PC-9 (cell line): ENCODE measurements at regions of chr10 and their contacts with region 1.

Region 1: GRCh38 chr10:46251857-46252847 is 34.6 kb upstream of the ANTXRL start:
- DNase-seq: no peak
- H3K4me3 ChIP-seq: no peak overlapping the region
- H3K27ac ChIP-seq: no peak overlapping the region
- H3K4me1 ChIP-seq: 0 out of 2 replicates have a peak, but pooled peaks cover 4% of the 10 kb centered on the region
- H3K27me3 ChIP-seq: no peaks in the 10 kb centered on the region
- CTCF ChIP-seq: no peak

Region 2: DNA sequence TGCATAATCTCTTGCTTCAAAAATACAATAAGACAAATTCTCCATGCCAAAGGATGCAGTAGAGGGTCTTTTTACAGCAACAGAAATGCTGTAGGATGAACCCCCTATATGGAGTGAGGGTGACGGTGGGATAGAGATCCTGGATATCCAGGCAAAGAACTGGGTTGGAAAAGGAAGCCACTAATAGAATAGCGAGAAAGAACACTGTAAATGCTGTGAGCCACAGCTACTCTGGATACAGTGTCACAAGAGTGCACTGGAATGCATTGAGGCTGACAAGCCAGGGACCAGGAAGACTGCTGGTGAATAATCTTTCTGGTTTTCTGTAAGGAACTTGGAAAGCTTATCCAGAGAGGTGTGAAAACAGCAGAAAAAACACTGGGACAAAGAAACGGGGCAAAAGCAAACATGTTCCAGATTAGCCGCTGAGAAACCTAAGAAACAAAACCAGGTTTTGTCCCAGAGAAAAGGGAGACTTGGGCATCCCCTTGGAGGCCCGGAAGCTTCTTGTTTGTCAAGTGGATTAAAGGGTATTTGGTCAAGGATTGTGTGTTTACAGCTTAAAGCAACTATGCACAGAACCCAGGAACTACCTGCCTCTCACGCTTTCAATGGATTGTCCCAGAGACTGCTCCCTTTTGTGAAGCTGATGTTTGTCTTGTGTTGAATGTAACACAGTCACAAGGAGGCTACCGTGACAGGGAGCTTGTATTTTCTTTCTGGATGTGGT is 199.9 kb before region 1 on chr10:
- CTCF ChIA-PET with region 1: no interaction called
- POLR2A ChIA-PET with region 1: no interaction called
- intact Hi-C with region 1: no loop called
- DNase-seq: no peak
- H3K4me3 ChIP-seq: no peak overlapping the region
- H3K27ac ChIP-seq: no peak overlapping the region
- H3K4me1 ChIP-seq: no peaks in the 10 kb centered on the region
- H3K27me3 ChIP-seq: no peaks in the 10 kb centered on the region
- CTCF ChIP-seq: no peak

Region 3: DNA sequence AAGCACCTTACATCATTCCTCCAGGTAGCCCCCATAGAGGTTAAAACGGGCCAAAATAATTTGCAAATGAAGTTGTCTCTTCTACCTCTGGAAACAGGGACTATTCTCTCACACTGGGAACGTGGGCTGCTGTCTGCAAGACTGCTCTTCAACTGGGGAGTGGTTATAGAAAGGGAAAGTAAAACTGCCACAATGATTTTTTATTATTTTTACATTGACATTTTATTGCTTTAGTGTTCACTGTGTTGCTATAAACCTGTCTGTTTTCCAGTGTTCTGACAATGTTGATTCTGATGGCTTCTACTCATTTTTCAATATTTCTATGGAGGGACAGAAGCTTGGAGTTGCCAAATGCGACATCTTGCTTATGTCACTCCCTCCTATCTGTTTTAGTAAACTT is 80.5 kb before region 1 on chr10:
- CTCF ChIA-PET with region 1: no interaction called
- POLR2A ChIA-PET with region 1: no interaction called
- intact Hi-C with region 1: no loop called
- DNase-seq: no peak
- H3K4me3 ChIP-seq: no peak overlapping the region
- H3K27ac ChIP-seq: no peak overlapping the region
- H3K4me1 ChIP-seq: no peaks in the 10 kb centered on the region
- H3K27me3 ChIP-seq: no peaks in the 10 kb centered on the region
- CTCF ChIP-seq: no peak

Region 4: GRCh38 chr10:46284293-46285229 is 32.4 kb after region 1 on chr10:
- CTCF ChIA-PET with region 1: no interaction called
- POLR2A ChIA-PET with region 1: no interaction called
- intact Hi-C with region 1: no loop called
- DNase-seq: peak; percentile 77 to 96
- H3K4me3 ChIP-seq: peak overlapping the region; percentile 93
- H3K27ac ChIP-seq: peak overlapping the region; percentile 57
- H3K4me1 ChIP-seq: peaks cover 57% of the 10 kb centered on the region
- H3K27me3 ChIP-seq: no peaks in the 10 kb centered on the region
- CTCF ChIP-seq: no peak

Region 5: DNA sequence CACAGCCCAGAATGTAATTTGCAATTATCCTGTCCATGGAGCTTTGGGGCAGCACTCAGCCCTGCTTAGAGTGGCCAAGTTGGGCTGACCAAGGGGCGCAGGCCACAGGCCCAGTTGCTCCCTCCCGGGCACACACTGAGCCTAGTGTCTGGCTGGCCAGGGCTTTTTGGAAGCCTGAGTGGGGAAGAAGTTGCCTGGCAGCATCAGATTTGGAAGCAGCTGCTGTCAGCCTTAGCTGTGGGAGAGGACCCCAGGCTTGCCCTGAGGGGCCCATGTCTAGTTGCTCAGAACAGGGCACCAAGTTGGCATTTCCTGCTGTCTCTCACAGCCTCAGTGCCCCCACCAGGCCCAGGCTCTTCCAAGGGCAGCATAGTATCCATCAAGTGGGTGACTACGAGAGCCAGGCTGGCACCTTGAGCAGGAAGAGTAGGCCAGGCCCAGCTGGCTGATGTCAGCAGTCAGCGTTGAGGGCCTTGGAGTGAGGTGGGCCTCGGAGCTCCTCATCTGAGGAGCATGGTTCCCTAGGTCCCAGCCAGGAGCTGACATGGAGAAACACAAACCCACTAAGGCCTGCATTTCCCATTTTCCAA is 49.0 kb after region 1 on chr10:
- CTCF ChIA-PET with region 1: interaction called, 15 read pairs
- POLR2A ChIA-PET with region 1: no interaction called
- intact Hi-C with region 1: no loop called
- DNase-seq: no peak
- H3K4me3 ChIP-seq: no peak overlapping the region
- H3K27ac ChIP-seq: no peak overlapping the region
- H3K4me1 ChIP-seq: peaks cover 13% of the 10 kb centered on the region
- H3K27me3 ChIP-seq: no peaks in the 10 kb centered on the region
- CTCF ChIP-seq: no peak

Region 6: DNA sequence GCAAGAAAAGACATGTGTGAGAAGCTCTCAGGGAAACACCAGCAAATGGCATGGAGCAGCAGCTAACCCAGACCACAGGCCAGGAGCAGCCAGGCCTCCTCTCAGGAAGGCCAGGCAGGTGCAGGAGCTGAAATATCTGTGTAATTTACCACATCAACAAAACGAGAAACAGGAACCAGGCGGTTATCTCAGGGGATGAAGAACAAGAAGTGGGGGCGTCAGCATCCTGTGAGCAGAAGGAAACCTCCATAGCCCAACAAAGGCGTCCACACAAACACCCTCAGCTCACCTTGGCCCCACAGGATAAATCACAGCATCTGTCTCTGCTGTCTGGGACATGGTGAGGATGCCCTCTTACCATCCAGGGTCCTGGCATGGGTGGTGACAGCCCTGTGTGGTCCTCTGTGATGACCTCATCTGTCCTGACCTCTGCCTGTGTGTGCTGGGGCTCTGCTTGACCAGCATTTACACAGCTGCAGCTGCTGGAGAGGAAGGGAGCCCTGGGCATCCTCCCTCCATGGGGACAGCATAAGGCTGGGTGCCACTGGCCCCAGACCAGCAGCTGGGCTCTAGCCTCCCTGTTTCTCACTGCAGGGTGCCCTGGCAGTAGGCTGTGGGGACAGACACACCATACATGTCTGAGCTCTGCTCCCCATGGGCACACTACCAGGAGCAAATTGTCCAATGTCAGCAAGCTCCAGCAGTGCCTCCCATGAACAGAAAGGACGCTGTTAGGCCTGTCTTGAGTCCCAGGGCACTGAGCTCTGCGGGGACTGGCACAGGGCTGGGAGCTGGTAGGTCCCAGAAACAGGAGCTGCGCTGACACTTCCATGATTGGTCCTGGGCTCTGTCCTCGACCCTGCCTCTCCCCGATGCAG is 1197.2 kb after region 1 on chr10:
- CTCF ChIA-PET with region 1: no interaction called
- POLR2A ChIA-PET with region 1: no interaction called
- intact Hi-C with region 1: no loop called
- DNase-seq: no peak
- H3K4me3 ChIP-seq: no peak overlapping the region
- H3K27ac ChIP-seq: no peak overlapping the region
- H3K4me1 ChIP-seq: no peaks in the 10 kb centered on the region
- H3K27me3 ChIP-seq: no peaks in the 10 kb centered on the region
- CTCF ChIP-seq: no peak